ENCODE measurements at regions of chr2 and their contacts with region 1.

Region 1: GRCh38 chr2:216404010-216404618 is 8.2 kb upstream of the SMARCAL1 start:
- DNase-seq: no peak
- H3K4me3 ChIP-seq: no peak overlapping the region
- H3K27me3 ChIP-seq: no peaks in the 10 kb centered on the region
- CTCF ChIP-seq: peak; percentile 83

Region 2: DNA sequence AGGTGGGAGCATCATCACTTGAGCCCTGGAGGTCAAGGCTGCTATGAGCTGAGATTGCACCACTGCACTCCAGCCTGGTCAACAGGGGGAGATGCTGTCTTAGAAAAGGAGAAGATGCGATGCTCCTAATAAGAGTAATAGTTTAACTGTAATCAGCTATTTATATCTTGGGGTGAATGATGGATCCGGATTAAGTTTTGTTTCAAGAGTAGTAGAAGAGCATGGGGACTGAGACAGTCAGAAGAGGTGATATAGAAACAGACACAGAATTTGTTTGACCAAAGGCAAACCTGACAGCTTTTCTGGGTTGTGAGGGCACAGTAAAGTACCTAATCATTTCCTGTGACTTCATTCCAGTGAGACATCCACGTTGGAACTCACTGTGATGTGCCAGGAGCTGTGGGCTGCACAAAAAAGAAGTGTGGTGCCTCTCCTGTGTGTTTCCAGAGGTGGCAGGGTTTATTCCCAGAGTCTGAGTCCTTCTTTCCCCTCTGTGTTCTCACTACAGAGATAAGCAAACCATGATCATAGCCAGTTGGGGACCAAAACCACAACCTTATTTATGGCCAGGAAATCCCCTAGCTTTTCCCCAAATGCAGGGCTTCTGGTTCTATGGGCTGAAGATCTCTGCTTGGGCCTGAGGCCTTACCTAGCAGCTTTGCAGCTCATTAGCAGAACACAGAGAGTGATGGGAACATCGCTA is 181.3 kb before region 1 on chr2:
- CTCF ChIA-PET with region 1: interaction called, 32 read pairs
- POLR2A ChIA-PET with region 1: no interaction called
- DNase-seq: no peak
- H3K4me3 ChIP-seq: no peak overlapping the region
- H3K27me3 ChIP-seq: no peaks in the 10 kb centered on the region
- CTCF ChIP-seq: peak; percentile 51

Region 3: DNA sequence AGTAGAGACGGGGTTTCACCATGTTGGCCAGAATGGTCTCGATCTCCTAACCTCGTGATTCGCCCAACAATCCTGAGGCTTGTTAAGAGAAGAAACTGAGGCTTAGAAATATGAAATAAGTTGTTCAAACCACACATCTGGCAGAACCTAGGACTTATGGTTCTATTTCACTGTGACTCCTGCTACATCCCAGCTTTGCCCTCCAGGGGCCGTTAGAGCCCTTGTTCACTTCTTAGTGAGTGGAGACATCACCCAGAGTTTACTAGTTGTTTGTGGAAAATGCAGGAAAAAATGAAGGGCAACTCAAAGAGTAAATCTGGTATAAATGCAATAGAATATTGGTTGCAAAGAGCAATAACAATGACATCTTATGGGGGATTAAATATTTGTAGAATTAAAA is 75.8 kb before region 1 on chr2:
- CTCF ChIA-PET with region 1: interaction called, 18 read pairs
- POLR2A ChIA-PET with region 1: no interaction called
- DNase-seq: no peak
- H3K4me3 ChIP-seq: no peak overlapping the region
- H3K27me3 ChIP-seq: no peaks in the 10 kb centered on the region
- CTCF ChIP-seq: peak; percentile 45

Region 4: DNA sequence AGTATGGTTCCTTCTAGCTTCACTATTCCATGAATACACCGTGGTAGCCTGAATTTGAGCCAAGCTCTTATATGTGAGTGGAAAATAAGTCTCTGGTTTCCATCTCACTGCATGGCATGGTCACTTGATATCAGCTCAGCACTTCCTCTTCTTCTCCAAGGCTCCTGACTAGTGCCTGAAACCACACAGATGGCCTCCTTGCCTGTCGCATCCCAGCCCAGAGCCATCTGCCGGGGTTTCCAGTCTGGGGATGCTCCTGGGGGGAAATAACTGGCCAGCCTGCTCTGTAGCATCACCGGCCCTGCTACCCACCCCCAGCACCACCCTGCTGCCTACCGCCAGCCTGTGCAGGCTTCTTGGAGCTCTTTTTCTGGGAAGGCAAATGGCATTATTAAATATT is 24.1 kb before region 1 on chr2:
- CTCF ChIA-PET with region 1: interaction called, 14 read pairs
- POLR2A ChIA-PET with region 1: no interaction called
- DNase-seq: no peak
- H3K4me3 ChIP-seq: no peak overlapping the region
- H3K27me3 ChIP-seq: no peaks in the 10 kb centered on the region
- CTCF ChIP-seq: no peak

Region 5: DNA sequence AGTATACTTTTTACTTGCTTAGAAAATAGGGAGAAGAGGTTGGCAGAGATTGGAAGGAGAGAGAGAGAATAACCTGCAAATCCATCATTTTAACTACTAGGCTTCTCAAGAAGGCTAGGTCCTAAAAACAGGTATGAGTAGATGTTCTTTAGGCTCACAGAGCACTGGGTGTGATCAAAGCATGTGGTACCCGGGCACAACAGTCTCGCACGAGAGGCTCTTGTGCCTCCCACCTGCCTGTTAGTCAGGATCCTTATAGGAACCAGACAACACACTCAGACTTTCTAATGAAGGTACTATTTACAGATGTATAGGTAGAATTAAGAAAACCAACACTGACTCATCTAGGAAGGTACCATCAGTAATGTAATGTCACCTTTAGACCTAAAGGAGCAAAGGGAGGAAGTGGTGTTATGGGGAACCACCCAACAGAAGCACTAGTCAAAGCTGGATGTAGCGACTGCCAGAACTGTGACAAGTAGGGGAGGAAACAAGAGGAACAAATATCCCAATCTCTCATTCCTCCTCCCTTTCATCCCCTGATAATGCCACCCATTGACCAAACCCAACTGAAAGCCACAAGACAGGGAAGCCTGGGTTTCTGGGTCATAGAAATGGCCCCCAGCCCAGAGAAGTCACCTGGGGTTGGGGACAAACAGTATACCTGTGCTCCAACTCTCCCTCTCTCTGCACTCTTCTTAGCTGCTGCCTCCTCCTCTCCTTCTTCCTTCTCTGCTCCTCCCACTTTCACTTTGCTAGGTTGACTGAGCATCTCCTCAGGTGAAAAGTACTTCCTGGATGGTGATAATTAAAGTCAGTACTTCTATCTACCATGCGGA is 15.8 kb before region 1 on chr2:
- CTCF ChIA-PET with region 1: interaction called, 23 read pairs
- POLR2A ChIA-PET with region 1: no interaction called
- DNase-seq: no peak
- H3K4me3 ChIP-seq: no peak overlapping the region
- H3K27me3 ChIP-seq: no peaks in the 10 kb centered on the region
- CTCF ChIP-seq: no peak

Measured in BJ (cell line).